GM18951 (cell line): ENCODE measurements at regions of chr19 and their contacts with region 1.

Region 1: GRCh38 chr19:19361075-19361594 is 40.5 kb downstream of the MAU2 start:
- POLR2A ChIP-seq: no peak

Region 2: GRCh38 chr19:19643158-19644053 is 282.3 kb after region 1 on chr19 and contains the start of gene GMIP:
- in situ Hi-C with region 1: loop called (anchors 25 kb)
- POLR2A ChIP-seq: peak; percentile 78